ENCODE measurements at regions of chr12 and their contacts with region 1.

Region 1: GRCh38 chr12:102119674-102120563 is at the starts of genes NUP37 and PARPBP:
- DNase-seq: peak; percentile 95
- H3K4me3 Mint-ChIP-seq: peak within 1 kb of the TSS; percentile 90
- H3K27ac Mint-ChIP-seq: peak within 1 kb of the TSS; percentile 80
- H3K4me1 Mint-ChIP-seq: peaks cover 19% of the 10 kb centered on the region
- H3K27me3 Mint-ChIP-seq: no peaks in the 10 kb centered on the region
- total RNA-seq, gene NUP37: 85.3 to 88.0 TPM
- total RNA-seq, gene PARPBP: 28.8 to 29.5 TPM

Region 2: GRCh38 chr12:100142851-100143559 is 1976.9 kb before region 1 on chr12 and contains the start of gene BLTP3B:
- CTCF ChIA-PET with region 1: no interaction called
- intact Hi-C with region 1: loop called (anchors 5 kb)
- DNase-seq: peak; percentile 93
- H3K4me3 Mint-ChIP-seq: peak within 1 kb of the TSS; percentile 91
- H3K27ac Mint-ChIP-seq: peak within 1 kb of the TSS; percentile 97
- H3K4me1 Mint-ChIP-seq: peaks cover 36% of the 10 kb centered on the region
- H3K27me3 Mint-ChIP-seq: no peaks in the 10 kb centered on the region
- total RNA-seq, gene BLTP3B: 27.0 to 27.2 TPM

Region 3: DNA sequence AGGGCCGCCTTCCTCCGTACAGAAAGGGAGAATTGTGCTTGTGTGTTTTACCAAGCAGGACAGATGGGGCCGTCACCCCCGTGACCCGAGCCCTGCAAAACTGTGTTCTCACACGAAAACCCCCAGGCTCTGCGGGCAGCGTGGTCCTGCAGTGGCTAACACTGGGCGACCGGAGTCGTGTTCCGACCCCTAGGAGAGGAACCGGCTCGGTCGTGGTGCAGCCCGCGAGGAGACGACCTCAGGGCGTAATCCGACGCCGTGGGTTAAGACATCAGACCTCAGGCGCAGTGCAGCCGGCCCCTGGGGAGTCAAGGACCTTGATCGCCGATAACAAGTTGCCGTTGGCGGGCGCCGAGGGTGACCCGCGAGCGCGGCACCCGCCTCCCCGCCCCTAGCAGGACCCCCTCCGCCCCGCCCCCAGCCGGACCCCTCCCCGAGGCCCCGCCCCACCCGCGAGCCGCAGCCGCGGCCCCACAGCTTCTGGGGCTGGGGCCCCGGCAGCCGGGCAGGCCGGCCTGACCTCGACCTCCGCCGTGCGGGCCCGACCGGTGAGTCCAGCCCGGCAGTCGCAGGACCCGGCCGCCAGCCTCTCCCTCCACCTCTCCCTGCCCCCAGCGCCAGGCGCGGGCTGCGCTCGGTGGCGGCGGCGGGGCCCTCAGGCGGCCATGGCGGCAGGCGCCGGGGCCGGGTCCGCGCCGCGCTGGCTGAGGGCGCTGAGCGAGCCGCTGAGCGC is 422.6 kb before region 1 on chr12 and contains the start of gene CHPT1:
- CTCF ChIA-PET with region 1: no interaction called
- intact Hi-C with region 1: loop called (anchors 5 kb)
- DNase-seq: peak; percentile 57
- H3K4me3 Mint-ChIP-seq: peak within 1 kb of the TSS; percentile 87
- H3K27ac Mint-ChIP-seq: peak within 1 kb of the TSS; percentile 80
- H3K4me1 Mint-ChIP-seq: peaks cover 45% of the 10 kb centered on the region
- H3K27me3 Mint-ChIP-seq: no peaks in the 10 kb centered on the region
- total RNA-seq, gene CHPT1: 17.1 to 20.0 TPM

Region 4: GRCh38 chr12:101876861-101877815 is 242.8 kb before region 1 on chr12 and contains the start of gene DRAM1:
- CTCF ChIA-PET with region 1: no interaction called
- intact Hi-C with region 1: loop called (anchors 1 kb)
- DNase-seq: peak; percentile 83
- H3K4me3 Mint-ChIP-seq: peak within 1 kb of the TSS; percentile 91
- H3K27ac Mint-ChIP-seq: peak within 1 kb of the TSS; percentile 64
- H3K4me1 Mint-ChIP-seq: peaks cover 12% of the 10 kb centered on the region
- H3K27me3 Mint-ChIP-seq: peaks cover 3% of the 10 kb centered on the region
- total RNA-seq, gene DRAM1: 4.1 to 4.9 TPM

Region 5: GRCh38 chr12:102061560-102062418 is 58.1 kb before region 1 on chr12 and contains the start of gene WASHC3:
- CTCF ChIA-PET with region 1: interaction called, 3 read pairs
- intact Hi-C with region 1: loop called (anchors 1 kb)
- DNase-seq: peak; percentile 98
- H3K4me3 Mint-ChIP-seq: peak within 1 kb of the TSS; percentile 96
- H3K27ac Mint-ChIP-seq: peak within 1 kb of the TSS; percentile 98
- H3K4me1 Mint-ChIP-seq: peaks cover 29% of the 10 kb centered on the region
- H3K27me3 Mint-ChIP-seq: no peaks in the 10 kb centered on the region
- total RNA-seq, gene WASHC3: 22.1 to 25.6 TPM

Region 6: DNA sequence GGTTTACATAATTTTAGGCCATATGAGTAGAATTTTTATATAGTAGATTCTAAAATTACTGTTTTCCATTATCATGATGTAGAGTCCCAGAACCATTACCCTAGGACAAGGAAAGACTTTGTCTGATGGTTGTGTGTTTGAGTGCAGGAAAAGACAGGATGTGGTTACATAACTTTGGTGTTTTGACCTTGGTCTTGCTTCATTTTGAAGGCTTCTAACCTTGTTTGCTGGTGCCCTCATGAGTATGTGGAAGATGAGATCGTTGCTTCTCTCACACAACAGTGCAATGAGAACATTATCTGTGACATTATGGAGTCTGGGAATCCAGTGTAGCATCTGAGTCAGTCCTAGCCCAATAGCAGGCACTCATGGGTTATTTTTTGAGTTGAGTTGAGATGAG is 254.3 kb after region 1 on chr12:
- CTCF ChIA-PET with region 1: no interaction called
- intact Hi-C with region 1: loop called (anchors 1 kb)
- DNase-seq: no peak
- H3K4me3 Mint-ChIP-seq: no peak overlapping the region
- H3K27ac Mint-ChIP-seq: no peak overlapping the region
- H3K4me1 Mint-ChIP-seq: peaks cover 5% of the 10 kb centered on the region
- H3K27me3 Mint-ChIP-seq: peaks cover 2% of the 10 kb centered on the region